Caco-2 (cell line): ENCODE measurements at regions of chr17 and their contacts with region 1.

Region 1: DNA sequence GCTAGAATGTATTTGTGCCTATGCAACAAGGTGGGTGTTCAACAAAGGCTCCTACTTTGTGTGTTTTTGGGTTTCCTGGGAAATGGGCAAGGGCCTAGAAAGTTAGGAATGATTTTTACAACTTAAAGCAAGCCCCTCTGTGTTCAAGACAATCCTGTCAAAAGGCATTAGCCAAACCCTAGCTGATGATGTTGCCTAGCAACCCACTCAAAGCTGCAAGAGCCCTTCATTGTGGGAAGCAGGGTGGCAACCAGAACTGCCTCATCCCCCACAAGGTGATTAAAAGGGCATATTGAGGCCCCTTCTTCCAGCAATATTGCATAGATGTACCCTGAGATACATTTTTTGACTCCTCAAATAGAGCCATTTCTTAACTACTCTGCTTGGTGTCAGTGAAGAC is 16.0 kb upstream of the RASL10B start:
- DNase-seq: no peak
- H3K4me3 ChIP-seq: no peak overlapping the region
- H3K4me3 Mint-ChIP-seq: no peak overlapping the region
- H3K27ac Mint-ChIP-seq: no peak overlapping the region
- H3K4me1 ChIP-seq: no peaks in the 10 kb centered on the region
- H3K4me1 Mint-ChIP-seq: peaks cover 8% of the 10 kb centered on the region
- H3K27me3 ChIP-seq: no peaks in the 10 kb centered on the region
- H3K27me3 Mint-ChIP-seq: no peaks in the 10 kb centered on the region
- CTCF ChIP-seq: no peak

Region 2: DNA sequence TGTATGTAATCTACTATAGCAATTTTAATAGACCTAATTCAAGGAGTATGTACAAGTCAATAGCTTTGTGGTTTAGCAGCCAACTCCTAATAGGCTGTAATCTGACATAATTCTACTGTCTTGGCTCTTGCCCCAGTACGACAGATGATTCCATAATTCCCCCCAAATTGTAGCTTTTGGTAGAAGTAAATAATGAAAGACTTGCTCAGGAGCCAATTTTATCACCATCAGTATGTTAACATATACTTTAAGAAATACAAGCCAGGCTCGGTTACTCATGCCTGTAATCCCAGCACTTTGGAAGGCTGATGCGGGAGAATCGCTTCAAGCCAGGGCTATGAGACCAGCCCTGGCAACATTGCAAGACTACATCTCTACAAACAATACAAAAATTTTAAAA is 74.4 kb before region 1 on chr17:
- CTCF ChIA-PET with region 1: no interaction called
- POLR2A ChIA-PET with region 1: no interaction called
- intact Hi-C with region 1: loop called (anchors 2 kb)
- DNase-seq: no peak
- H3K4me3 ChIP-seq: no peak overlapping the region
- H3K4me3 Mint-ChIP-seq: no peak overlapping the region
- H3K27ac Mint-ChIP-seq: no peak overlapping the region
- H3K4me1 ChIP-seq: no peaks in the 10 kb centered on the region
- H3K4me1 Mint-ChIP-seq: no peaks in the 10 kb centered on the region
- H3K27me3 ChIP-seq: no peaks in the 10 kb centered on the region
- H3K27me3 Mint-ChIP-seq: no peaks in the 10 kb centered on the region
- CTCF ChIP-seq: no peak